ENCODE measurements at regions of chr3 and their contacts with region 1.

Region 1: GRCh38 chr3:120498556-120499346 is 48.0 kb upstream of the FSTL1 start:
- DNase-seq: peak; percentile 46 to 93
- H3K4me3 ChIP-seq: no peak overlapping the region
- H3K27ac ChIP-seq: peak overlapping the region; percentile 50
- H3K4me1 ChIP-seq: peaks cover 20% of the 10 kb centered on the region
- H3K27me3 ChIP-seq: no peaks in the 10 kb centered on the region
- CTCF ChIP-seq: no peak
- POLR2A ChIP-seq: no peak

Region 2: GRCh38 chr3:119819806-119820205 is 678.9 kb before region 1 on chr3:
- intact Hi-C with region 1: loop called (anchors 10 kb)
- DNase-seq: no peak
- H3K4me3 ChIP-seq: no peak overlapping the region
- H3K27ac ChIP-seq: no peak overlapping the region
- H3K4me1 ChIP-seq: no peaks in the 10 kb centered on the region
- H3K27me3 ChIP-seq: no peaks in the 10 kb centered on the region
- CTCF ChIP-seq: no peak
- POLR2A ChIP-seq: no peak

Region 3: DNA sequence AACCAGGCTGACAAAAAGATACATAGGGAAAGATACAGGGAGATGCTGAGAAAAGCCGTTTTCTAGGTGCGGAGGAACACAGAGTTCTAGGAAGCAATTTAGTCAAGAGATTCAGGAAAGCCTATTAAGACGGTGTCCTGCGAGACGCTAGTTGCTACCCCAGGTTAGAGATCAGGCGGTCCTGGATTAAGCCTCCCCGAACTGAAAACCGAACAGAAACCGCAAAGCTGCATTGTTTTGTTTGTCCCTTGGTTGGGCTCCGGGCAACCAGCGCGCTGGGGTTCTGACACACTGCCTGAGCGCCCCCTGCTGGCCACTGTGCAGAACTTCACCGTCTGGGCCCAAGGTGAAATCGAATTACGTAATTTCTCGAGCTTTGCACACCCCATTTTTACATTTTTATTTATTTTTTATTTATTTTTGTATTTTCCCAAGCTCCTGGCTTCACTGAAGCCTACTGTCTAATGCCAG is 60.1 kb after region 1 on chr3:
- intact Hi-C with region 1: loop called (anchors 10 kb)
- DNase-seq: no peak
- H3K4me3 ChIP-seq: peak overlapping the region; percentile 39 to 45
- H3K27ac ChIP-seq: peak overlapping the region; percentile 82
- H3K4me1 ChIP-seq: peaks cover 19% of the 10 kb centered on the region
- H3K27me3 ChIP-seq: no peaks in the 10 kb centered on the region
- CTCF ChIP-seq: peak; percentile 97 to 99 (median 98)
- POLR2A ChIP-seq: no peak

Measured in vagina (tissue), 2 donors.